Panc1 (cell line): ENCODE measurements at regions of chr14 and their contacts with region 1.

Region 1: GRCh38 chr14:32576088-32576795 is 247.1 kb downstream of the AKAP6 start:
- DNase-seq: peak; percentile 47
- ATAC-seq: peak; percentile 78
- H3K4me3 ChIP-seq: no peak overlapping the region
- H3K27ac ChIP-seq: no peak overlapping the region
- H3K4me1 ChIP-seq: no peaks in the 10 kb centered on the region
- H3K27me3 ChIP-seq: no peaks in the 10 kb centered on the region
- CTCF ChIP-seq: peak; percentile 83

Region 2: GRCh38 chr14:32623300-32624093 is 47.3 kb after region 1 on chr14:
- CTCF ChIA-PET with region 1: no interaction called
- POLR2A ChIA-PET with region 1: no interaction called
- in situ Hi-C with region 1: no loop called
- intact Hi-C with region 1: no loop called
- DNase-seq: no peak
- ATAC-seq: no peak
- H3K4me3 ChIP-seq: no peak overlapping the region
- H3K27ac ChIP-seq: no peak overlapping the region
- H3K4me1 ChIP-seq: no peaks in the 10 kb centered on the region
- H3K27me3 ChIP-seq: no peaks in the 10 kb centered on the region
- CTCF ChIP-seq: no peak

Region 3: GRCh38 chr14:33432407-33433023 is 856.3 kb after region 1 on chr14:
- CTCF ChIA-PET with region 1: no interaction called
- POLR2A ChIA-PET with region 1: no interaction called
- in situ Hi-C with region 1: no loop called
- intact Hi-C with region 1: loop called (anchors 5 kb)
- DNase-seq: no peak
- ATAC-seq: no peak
- H3K4me3 ChIP-seq: no peak overlapping the region
- H3K27ac ChIP-seq: no peak overlapping the region
- H3K4me1 ChIP-seq: no peaks in the 10 kb centered on the region
- H3K27me3 ChIP-seq: no peaks in the 10 kb centered on the region
- CTCF ChIP-seq: peak; percentile 30; the same call in 1 of the 2 replicates

Region 4: GRCh38 chr14:33792720-33793368 is 1216.6 kb after region 1 on chr14:
- CTCF ChIA-PET with region 1: no interaction called
- POLR2A ChIA-PET with region 1: no interaction called
- in situ Hi-C with region 1: no loop called
- intact Hi-C with region 1: loop called (anchors 2 kb)
- DNase-seq: peak; percentile 25
- ATAC-seq: peak; percentile 75
- H3K4me3 ChIP-seq: no peak overlapping the region
- H3K27ac ChIP-seq: no peak overlapping the region
- H3K4me1 ChIP-seq: no peaks in the 10 kb centered on the region
- H3K27me3 ChIP-seq: no peaks in the 10 kb centered on the region; the same call in 1 of the 2 replicates
- CTCF ChIP-seq: peak; percentile 87

Region 5: GRCh38 chr14:34322940-34323418 is 1746.7 kb after region 1 on chr14:
- CTCF ChIA-PET with region 1: no interaction called
- POLR2A ChIA-PET with region 1: no interaction called
- in situ Hi-C with region 1: no loop called
- intact Hi-C with region 1: loop called (anchors 5 kb)
- DNase-seq: no peak
- ATAC-seq: peak; percentile 73; the same call in 1 of the 2 replicates
- H3K4me3 ChIP-seq: no peak overlapping the region
- H3K27ac ChIP-seq: no peak overlapping the region
- H3K4me1 ChIP-seq: no peaks in the 10 kb centered on the region
- H3K27me3 ChIP-seq: peaks cover 2% of the 10 kb centered on the region
- CTCF ChIP-seq: peak; percentile 83